ENCODE measurements at regions of chr4 and their contacts with region 1.

Region 1: DNA sequence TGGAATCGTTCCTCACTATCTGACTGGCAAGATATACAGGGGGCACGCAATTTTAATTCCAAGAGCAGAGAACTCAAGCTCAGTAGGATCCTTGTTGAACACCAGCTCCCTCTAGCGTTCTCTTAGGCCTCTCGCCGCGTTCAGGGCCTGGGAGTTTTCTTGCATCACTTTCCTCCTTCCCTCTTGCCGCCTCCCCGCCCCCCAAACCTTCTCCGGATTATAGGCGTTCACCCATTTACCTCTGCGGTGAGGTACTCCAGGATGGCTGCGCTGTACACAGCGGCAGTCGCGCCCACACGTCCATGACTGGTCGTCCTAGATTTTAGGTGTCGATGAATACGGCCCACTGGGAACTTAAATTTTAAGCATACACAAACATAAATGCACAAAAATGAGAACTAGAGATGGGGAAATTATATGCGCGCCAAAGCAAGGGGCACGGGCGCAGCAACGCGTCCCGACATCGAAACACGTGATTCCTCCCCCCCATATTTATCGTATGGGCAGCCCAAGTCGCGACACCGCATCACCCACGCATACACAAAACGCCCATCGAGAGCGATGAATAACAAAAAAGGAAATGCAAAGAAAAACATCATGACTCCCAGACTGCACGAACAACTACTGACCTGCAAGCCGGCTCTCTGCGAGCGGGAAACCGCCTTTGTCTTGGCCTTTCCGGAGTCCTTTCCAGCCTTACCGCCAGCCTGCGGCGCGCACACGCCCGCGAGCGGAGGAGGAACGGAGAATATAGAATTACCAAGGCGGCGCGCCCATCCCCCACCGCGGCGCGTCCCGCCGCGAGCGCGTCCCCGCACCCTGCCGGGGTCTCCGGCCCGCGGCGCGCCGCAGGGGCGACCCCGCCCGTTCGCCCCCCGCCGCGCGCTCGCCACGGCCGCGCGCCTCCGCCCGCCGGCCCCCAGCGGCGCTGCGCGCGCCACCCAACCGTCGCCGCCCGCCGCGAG is 759 bp downstream of the H2AZ1 start:
- DNase-seq: peak; percentile 86
- H3K4me3 ChIP-seq: peak overlapping the region; percentile 90
- H3K27ac ChIP-seq: peak overlapping the region; percentile 91
- H3K27me3 ChIP-seq: no peaks in the 10 kb centered on the region
- CTCF ChIP-seq: peak; percentile 92

Region 2: GRCh38 chr4:99894161-99894997 is 54.9 kb before region 1 on chr4 and contains the start of gene LAMTOR3:
- CTCF ChIA-PET with region 1: interaction called, 10 read pairs
- POLR2A ChIA-PET with region 1: interaction called, 10 read pairs
- DNase-seq: peak; percentile 51
- H3K4me3 ChIP-seq: peak within 1 kb of the TSS; percentile 90
- H3K27ac ChIP-seq: peak within 1 kb of the TSS; percentile 80
- H3K27me3 ChIP-seq: no peaks in the 10 kb centered on the region
- CTCF ChIP-seq: no peak
- polyA plus RNA-seq, gene LAMTOR3: 44.2 and 66.3 TPM in 2 replicates

Region 3: GRCh38 chr4:99921174-99921573 is 28.1 kb before region 1 on chr4:
- CTCF ChIA-PET with region 1: interaction called, 13 read pairs
- POLR2A ChIA-PET with region 1: no interaction called
- DNase-seq: no peak
- H3K4me3 ChIP-seq: no peak overlapping the region
- H3K27ac ChIP-seq: no peak overlapping the region
- H3K27me3 ChIP-seq: no peaks in the 10 kb centered on the region
- CTCF ChIP-seq: no peak

Region 4: DNA sequence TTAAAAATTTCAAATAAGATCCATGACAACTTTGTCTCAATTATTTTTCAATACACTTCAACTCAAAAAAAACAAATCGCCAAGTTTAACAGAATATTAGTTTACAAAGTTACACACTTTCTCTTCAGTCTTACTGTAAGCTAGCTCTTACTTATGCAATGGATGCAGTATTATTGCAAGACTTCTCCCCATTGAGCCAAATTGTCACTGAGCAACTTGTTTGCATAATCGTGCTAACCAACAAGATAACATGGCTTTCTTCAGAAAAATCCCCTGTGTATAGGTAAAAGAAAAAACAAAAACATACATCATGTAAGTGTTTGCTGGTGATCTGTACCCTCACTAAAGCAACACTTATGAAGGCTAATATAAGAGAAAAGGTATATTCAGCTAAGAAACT is 21.8 kb before region 1 on chr4:
- CTCF ChIA-PET with region 1: interaction called, 13 read pairs
- POLR2A ChIA-PET with region 1: no interaction called
- DNase-seq: no peak
- H3K4me3 ChIP-seq: no peak overlapping the region
- H3K27ac ChIP-seq: no peak overlapping the region
- H3K27me3 ChIP-seq: no peaks in the 10 kb centered on the region
- CTCF ChIP-seq: no peak

Region 5: DNA sequence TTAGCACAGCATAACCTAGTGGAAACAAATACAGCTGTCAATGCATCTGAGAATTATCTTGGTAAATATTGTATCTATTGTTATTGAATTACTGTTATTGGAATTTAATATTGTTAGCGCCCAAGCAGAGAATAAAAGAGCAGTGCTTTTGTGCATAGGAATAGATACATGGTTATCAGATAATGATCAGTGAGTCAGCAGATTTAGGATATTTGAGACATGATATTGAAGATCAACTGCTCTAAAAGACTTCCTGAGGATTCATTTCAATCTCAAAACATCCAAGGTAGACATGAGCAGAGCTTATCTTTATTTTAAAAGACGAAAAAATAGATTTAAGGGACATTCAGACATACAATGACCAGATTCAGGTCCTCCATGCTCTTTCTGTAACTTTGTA is 11.3 kb after region 1 on chr4:
- CTCF ChIA-PET with region 1: interaction called, 17 read pairs
- POLR2A ChIA-PET with region 1: interaction called, 15 read pairs
- DNase-seq: no peak
- H3K4me3 ChIP-seq: no peak overlapping the region
- H3K27ac ChIP-seq: no peak overlapping the region
- H3K27me3 ChIP-seq: no peaks in the 10 kb centered on the region
- CTCF ChIP-seq: no peak

Region 6: GRCh38 chr4:99968330-99968729 is 19.0 kb after region 1 on chr4:
- CTCF ChIA-PET with region 1: interaction called, 8 read pairs
- POLR2A ChIA-PET with region 1: interaction called, 15 read pairs
- DNase-seq: peak; percentile 76
- H3K4me3 ChIP-seq: no peak overlapping the region
- H3K27ac ChIP-seq: peak overlapping the region; percentile 88
- H3K27me3 ChIP-seq: no peaks in the 10 kb centered on the region
- CTCF ChIP-seq: no peak

Measured in AG04450 (cell line).